ENCODE measurements at regions of chr19 and their contacts with region 1.

Region 1: GRCh38 chr19:40777937-40778705 is at the start of gene RAB4B:
- DNase-seq: peak; percentile 100
- H3K4me3 Mint-ChIP-seq: peak within 1 kb of the TSS; percentile 86
- H3K27ac Mint-ChIP-seq: peak within 1 kb of the TSS; percentile 85
- H3K4me1 Mint-ChIP-seq: peaks cover 30% of the 10 kb centered on the region
- H3K27me3 Mint-ChIP-seq: no peaks in the 10 kb centered on the region
- CTCF ChIP-seq: no peak
- total RNA-seq, gene RAB4B: 21.0 and 22.7 TPM in 2 replicates

Region 2: DNA sequence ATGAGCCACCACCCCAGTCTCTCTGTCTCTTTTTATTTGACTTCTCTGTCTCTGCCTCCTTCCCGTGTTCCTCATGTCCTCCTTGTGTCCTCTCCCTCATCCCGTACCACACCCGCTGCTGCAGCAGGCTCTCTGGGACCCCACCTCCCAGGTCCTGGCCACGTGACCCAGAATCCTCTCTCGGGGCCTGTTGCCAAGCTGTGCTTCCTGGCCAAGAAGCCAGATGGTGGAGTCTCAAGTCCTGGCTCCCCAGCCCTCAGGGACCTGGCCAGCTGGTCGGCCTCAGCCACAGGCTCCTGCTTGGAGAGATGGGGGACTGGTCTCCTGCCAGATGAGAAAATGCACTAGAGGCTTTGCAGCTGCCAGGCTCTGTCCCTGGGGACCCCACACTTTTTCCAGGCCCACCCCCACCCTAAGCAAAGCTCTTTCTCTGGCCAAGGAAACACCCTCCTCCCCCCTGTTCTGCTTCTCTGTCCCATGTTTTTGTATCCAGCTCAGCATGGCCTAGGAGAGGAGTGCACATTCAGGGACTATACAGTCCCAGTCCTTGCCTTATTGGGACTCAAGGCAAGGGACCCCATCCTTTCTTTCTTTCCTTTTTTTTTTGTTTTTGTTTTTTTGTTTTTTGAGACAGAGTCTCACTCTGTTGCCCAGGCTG is 235.8 kb before region 1 on chr19:
- CTCF ChIA-PET with region 1: no interaction called
- intact Hi-C with region 1: no loop called
- DNase-seq: no peak
- H3K4me3 Mint-ChIP-seq: no peak overlapping the region
- H3K27ac Mint-ChIP-seq: no peak overlapping the region
- H3K4me1 Mint-ChIP-seq: peaks cover 7% of the 10 kb centered on the region
- H3K27me3 Mint-ChIP-seq: peaks cover 20% of the 10 kb centered on the region
- CTCF ChIP-seq: no peak

Region 3: DNA sequence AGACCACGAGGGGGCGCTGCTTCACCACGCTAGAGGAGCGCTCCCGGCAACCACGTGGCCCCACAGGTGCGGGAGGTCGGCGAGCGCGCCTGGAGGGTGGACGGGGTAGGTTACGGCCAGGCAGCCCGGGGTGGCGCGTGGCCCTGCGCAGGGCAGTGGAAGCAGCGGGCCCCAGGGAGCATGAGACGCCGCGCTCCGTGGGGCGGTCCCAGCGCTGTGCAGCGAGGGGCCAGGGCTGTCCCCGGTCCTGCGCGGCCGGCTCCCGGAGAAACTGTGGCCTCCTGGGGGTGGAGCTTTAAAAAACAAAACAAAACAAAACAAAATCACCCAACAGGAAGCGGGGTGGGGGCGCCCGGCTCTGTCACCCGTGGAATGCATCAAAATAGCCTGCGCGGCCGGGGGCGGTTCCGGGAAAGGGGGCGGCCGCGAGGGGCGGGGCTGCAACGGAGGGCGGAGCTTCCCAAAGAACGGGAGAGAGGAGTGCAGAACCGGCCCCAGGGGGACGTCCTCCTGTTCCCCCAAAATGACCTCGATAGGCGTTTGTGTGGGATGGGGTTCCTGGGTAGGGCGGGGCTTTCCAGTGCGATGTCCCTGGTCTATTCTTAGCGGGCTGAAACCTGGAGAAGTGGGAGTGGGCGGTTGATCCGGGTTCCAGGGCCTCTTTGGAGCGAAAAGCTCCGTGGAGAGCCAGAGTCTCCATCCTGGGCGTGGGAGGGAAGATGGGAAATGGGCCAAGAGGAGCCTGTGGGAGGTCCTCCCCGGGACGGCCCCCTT is 115.0 kb before region 1 on chr19:
- CTCF ChIA-PET with region 1: interaction called, 4 read pairs
- intact Hi-C with region 1: loop called (anchors 10 kb)
- DNase-seq: peak; percentile 98
- H3K4me3 Mint-ChIP-seq: peak overlapping the region; percentile 79
- H3K27ac Mint-ChIP-seq: peak overlapping the region; percentile 69
- H3K4me1 Mint-ChIP-seq: peaks cover 22% of the 10 kb centered on the region
- H3K27me3 Mint-ChIP-seq: no peaks in the 10 kb centered on the region
- CTCF ChIP-seq: peak; percentile 100

Region 4: DNA sequence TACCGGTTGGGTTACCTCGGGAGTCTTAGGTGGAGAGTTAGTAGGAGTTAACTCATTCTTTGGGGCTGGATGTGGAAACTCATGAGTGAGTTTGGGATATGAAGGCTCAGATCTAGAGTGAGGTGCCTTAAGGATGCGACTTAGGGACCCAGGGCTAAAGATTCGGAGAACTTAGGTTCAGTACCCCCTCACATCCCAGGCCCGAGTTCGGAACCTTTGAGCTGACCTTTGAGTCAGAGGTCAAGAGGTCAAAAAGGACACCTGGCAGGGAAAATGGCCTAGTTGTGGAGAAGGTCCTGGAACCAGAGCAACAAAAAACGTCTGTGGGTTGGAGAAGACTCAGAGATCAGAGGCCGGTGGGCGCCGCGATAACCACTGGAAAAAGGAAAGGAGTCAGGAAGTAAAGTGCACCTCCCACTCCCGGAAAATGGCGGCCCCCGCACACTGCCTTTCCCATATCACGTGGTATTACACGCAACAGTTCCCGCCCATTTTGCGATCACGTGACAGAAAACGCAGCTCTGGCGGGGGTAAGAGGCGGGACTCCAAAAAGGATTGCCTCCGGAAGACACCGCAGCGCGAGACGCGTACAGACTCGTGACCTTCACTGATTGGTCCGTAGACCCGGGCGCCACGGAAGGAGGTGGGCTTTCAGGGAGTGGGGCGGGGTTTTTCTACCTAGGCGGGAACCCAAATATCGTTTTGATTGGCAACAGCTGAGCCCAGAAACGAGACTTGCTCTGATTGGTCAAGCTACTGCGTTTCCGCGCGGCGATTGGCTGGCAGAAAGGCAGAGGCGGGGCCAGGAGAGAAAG is 27.9 kb before region 1 on chr19 and contains the start of gene ACTMAP:
- CTCF ChIA-PET with region 1: interaction called, 10 read pairs
- intact Hi-C with region 1: no loop called
- DNase-seq: peak; percentile 99
- H3K4me3 Mint-ChIP-seq: peak within 1 kb of the TSS; percentile 84
- H3K27ac Mint-ChIP-seq: peak within 1 kb of the TSS; percentile 92
- H3K4me1 Mint-ChIP-seq: peaks cover 43% of the 10 kb centered on the region
- H3K27me3 Mint-ChIP-seq: no peaks in the 10 kb centered on the region
- CTCF ChIP-seq: no peak
- total RNA-seq, gene ACTMAP: 17.8 and 20.2 TPM in 2 replicates

Region 5: GRCh38 chr19:40798223-40798996 is 20.3 kb after region 1 on chr19:
- CTCF ChIA-PET with region 1: interaction called, 15 read pairs
- intact Hi-C with region 1: no loop called
- DNase-seq: peak; percentile 100
- H3K4me3 Mint-ChIP-seq: peak overlapping the region; percentile 88
- H3K27ac Mint-ChIP-seq: peak overlapping the region; percentile 95
- H3K4me1 Mint-ChIP-seq: peaks cover 48% of the 10 kb centered on the region
- H3K27me3 Mint-ChIP-seq: no peaks in the 10 kb centered on the region
- CTCF ChIP-seq: peak; percentile 49

Region 6: GRCh38 chr19:40995355-40995754 is 217.2 kb after region 1 on chr19:
- CTCF ChIA-PET with region 1: no interaction called
- intact Hi-C with region 1: no loop called
- DNase-seq: no peak
- H3K4me3 Mint-ChIP-seq: no peak overlapping the region
- H3K27ac Mint-ChIP-seq: peak overlapping the region; percentile 24
- H3K4me1 Mint-ChIP-seq: peaks cover 56% of the 10 kb centered on the region
- H3K27me3 Mint-ChIP-seq: no peaks in the 10 kb centered on the region
- CTCF ChIP-seq: no peak

Region 7: GRCh38 chr19:41175801-41176777 is 398.0 kb after region 1 on chr19:
- CTCF ChIA-PET with region 1: interaction called, 10 read pairs
- intact Hi-C with region 1: no loop called
- DNase-seq: peak; percentile 92
- H3K4me3 Mint-ChIP-seq: peak overlapping the region; percentile 44
- H3K27ac Mint-ChIP-seq: peak overlapping the region; percentile 67
- H3K4me1 Mint-ChIP-seq: peaks cover 37% of the 10 kb centered on the region
- H3K27me3 Mint-ChIP-seq: no peaks in the 10 kb centered on the region
- CTCF ChIP-seq: no peak

Measured in Calu3 (cell line).